Adrenal gland (tissue), 19 donors: ENCODE measurements at regions of chr1 and their contacts with region 1.

Region 1: GRCh38 chr1:9629445-9630201 is 21.9 kb upstream of the PIK3CD start:
- DNase-seq: peak in 5 of 7 donors; percentile 32 to 47 (median 36)
- H3K4me3 ChIP-seq: no peak overlapping the region
- H3K27ac ChIP-seq: peak overlapping the region in 1 of 5 donors; percentile 16
- H3K4me1 ChIP-seq: no peaks in the 10 kb centered on the region
- H3K27me3 ChIP-seq: no peaks in the 10 kb centered on the region
- CTCF ChIP-seq: no peak
- POLR2A ChIP-seq: no peak

Region 2: DNA sequence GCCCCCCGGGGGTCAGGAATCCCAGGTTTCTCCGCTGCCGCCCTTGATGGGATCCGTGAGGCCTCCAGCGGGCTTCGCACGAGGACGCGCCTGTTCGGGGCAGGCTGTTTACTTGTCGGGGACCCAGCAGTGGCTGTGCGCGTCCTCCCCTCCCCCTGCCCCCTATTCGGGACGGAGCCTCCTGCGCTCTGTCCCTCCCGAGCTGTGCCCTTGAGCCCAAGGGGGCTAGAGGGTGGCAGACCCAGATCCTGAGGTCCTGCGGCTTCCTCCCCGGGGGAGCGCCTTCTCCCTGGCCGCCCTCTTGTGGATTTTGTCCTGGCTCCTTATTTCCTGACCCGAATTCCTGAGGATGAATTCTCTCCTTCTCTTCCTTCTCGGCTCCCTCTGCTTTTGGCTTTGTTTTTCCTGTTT is 60.4 kb after region 1 on chr1:
- intact Hi-C with region 1: loop called in 1 of 2 experiments (anchors 10 kb)
- DNase-seq: peak in 6 of 7 donors; percentile 37 to 58 (median 45)
- H3K4me3 ChIP-seq: peak overlapping the region in 2 of 4 donors; percentile 37 to 85
- H3K27ac ChIP-seq: peak overlapping the region in 1 of 5 donors; percentile 30
- H3K4me1 ChIP-seq: peaks cover 29 to 34% of the 10 kb centered on the region in 2 donors
- H3K27me3 ChIP-seq: no peaks in the 10 kb centered on the region
- CTCF ChIP-seq: no peak
- POLR2A ChIP-seq: no peak

Region 3: DNA sequence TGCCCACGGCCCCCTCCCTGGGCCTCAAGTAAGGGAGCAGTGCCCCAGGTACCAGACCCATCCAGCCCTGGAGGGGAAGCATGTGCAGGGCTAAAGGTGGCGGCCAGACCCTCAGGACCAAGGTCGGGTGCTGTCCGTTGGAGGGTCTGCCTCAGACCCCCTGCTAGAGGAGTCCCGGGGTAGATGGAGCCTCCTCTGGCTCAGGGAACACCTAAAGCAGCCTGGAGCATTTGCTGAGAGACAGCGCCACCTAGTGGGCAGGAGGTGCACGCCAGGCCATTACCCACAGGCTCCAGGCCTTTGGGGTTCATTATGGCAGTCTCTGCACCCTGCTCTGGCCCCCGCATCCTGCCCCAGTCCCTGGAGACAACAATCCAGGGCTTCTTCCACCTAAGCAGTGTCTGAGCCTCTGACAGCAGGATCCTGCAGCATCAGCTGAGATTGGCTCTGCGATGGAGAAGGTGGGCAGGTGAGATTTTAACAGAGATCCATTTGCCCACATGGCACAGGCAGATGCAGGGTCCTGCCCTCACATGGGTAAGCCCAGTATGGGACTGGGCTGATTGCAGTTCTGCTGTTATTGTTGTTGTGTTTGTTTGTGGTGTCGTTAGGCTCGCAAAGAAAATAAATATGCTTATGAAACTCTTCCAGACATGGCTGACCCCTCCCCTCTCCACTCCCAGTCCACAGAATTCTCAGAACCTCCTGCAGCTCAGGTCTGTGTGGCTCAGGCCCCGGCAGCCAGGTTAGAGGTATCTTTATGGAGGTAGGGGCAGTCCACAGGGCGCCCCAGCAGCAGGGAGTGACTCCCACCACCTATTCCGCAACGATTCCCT is 238.0 kb after region 1 on chr1:
- intact Hi-C with region 1: loop called (anchors 5 to 10 kb)
- DNase-seq: peak; percentile 73 to 95 (median 84)
- H3K4me3 ChIP-seq: no peak overlapping the region
- H3K27ac ChIP-seq: peak overlapping the region in 1 of 5 donors; percentile 4
- H3K4me1 ChIP-seq: peaks cover 7% of the 10 kb centered on the region in 2 donors
- H3K27me3 ChIP-seq: no peaks in the 10 kb centered on the region
- CTCF ChIP-seq: peak; percentile 95 to 99 (median 97)
- POLR2A ChIP-seq: no peak

Region 4: GRCh38 chr1:9874959-9875635 is 245.5 kb after region 1 on chr1:
- intact Hi-C with region 1: loop called in 1 of 2 experiments (anchors 10 kb)
- DNase-seq: peak; percentile 52 to 83 (median 70)
- H3K4me3 ChIP-seq: peak overlapping the region in 1 of 4 donors; percentile 22
- H3K27ac ChIP-seq: no peak overlapping the region
- H3K4me1 ChIP-seq: peaks cover 0 to 10% of the 10 kb centered on the region in 2 donors
- H3K27me3 ChIP-seq: no peaks in the 10 kb centered on the region
- CTCF ChIP-seq: peak; percentile 84 to 96 (median 91)
- POLR2A ChIP-seq: no peak

Region 5: DNA sequence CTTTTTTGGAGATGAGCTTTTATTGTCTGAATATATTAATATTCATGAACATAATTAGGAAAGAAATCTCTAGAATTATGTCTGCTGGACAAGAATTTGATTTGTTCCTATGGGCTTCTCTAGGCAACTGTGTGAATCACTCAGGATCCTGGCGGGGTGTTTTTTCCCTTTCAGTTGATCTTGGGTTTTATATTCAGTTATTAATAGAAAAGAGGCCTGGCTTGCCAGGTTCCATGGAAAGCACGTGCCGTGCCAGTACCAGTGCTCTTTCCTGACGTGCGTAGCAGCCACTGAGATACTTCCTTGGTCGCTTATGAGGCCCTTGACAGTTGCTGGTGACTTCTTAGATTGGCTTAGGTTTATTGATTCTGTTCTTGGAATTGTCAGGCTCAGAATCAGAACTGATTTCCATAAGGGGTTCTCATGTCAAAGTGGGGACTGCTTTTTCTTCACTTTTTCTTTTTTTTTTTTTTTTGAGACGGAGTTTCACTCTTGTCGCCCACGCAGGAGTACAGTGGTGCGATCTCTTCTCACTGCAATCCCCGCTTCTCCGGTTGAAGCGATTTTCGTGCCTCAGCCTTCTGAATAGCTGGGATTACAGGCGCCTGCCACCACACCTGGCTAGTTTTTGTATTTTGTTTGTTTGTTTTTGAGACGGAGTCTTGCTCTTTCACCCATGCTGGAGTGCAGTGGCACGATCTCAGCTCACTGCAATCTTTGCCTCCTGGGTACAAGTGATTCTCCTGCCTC is 532.1 kb after region 1 on chr1:
- intact Hi-C with region 1: no loop called
- DNase-seq: peak in 6 of 7 donors; percentile 32 to 78 (median 43)
- H3K4me3 ChIP-seq: no peak overlapping the region
- H3K27ac ChIP-seq: peak overlapping the region in 1 of 5 donors; percentile 56
- H3K4me1 ChIP-seq: peaks cover 0 to 4% of the 10 kb centered on the region in 2 donors
- H3K27me3 ChIP-seq: no peaks in the 10 kb centered on the region
- CTCF ChIP-seq: no peak
- POLR2A ChIP-seq: no peak